ENCODE measurements at regions of chr9 and their contacts with region 1.

Region 1: GRCh38 chr9:122991370-122991830 is 42.1 kb upstream of the GPR21 start:
- DNase-seq: peak; percentile 66
- ATAC-seq: peak; percentile 90
- H3K4me3 Mint-ChIP-seq: no peak overlapping the region
- H3K27ac Mint-ChIP-seq: no peak overlapping the region
- H3K4me1 Mint-ChIP-seq: peaks cover 7% of the 10 kb centered on the region
- H3K27me3 Mint-ChIP-seq: no peaks in the 10 kb centered on the region

Region 2: GRCh38 chr9:122464633-122465567 is 526.5 kb before region 1 on chr9:
- CTCF ChIA-PET with region 1: no interaction called
- POLR2A ChIA-PET with region 1: no interaction called
- intact Hi-C with region 1: loop called (anchors 2 kb)
- DNase-seq: peak; percentile 81
- ATAC-seq: peak; percentile 84
- H3K4me3 Mint-ChIP-seq: peak overlapping the region; percentile 68
- H3K27ac Mint-ChIP-seq: peak overlapping the region; percentile 79
- H3K4me1 Mint-ChIP-seq: peaks cover 14% of the 10 kb centered on the region
- H3K27me3 Mint-ChIP-seq: peaks cover 27% of the 10 kb centered on the region

Region 3: DNA sequence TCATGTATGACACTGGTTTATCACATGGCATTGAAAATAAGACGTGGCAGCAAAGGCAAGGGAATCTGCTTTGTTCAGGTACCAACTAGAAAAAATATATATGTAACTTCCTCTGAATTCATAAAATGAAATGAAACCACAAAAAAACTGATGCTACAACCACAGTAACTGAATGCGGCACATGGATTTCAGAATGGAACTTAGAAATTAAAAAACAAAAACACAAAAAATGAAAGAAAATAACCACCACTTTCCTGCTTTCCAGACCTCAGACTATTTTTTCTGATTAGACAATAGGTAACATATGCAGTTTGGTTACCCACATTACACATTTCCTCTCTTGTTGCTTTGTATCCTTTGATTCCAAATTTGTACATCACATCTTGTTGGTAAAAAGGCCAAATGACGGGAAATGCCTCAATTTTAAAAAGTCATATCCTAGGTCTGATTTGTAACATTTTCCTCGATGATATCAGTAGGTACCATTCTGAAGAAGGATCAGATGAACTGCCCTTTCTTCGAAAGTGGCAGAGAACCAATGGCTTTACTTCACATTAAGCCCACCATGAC is 144.9 kb before region 1 on chr9:
- CTCF ChIA-PET with region 1: interaction called, 3 read pairs
- POLR2A ChIA-PET with region 1: no interaction called
- intact Hi-C with region 1: loop called in 1 of 2 experiments (anchors 10 kb)
- DNase-seq: no peak
- ATAC-seq: peak; percentile 48
- H3K4me3 Mint-ChIP-seq: no peak overlapping the region
- H3K27ac Mint-ChIP-seq: peak overlapping the region; percentile 92
- H3K4me1 Mint-ChIP-seq: peaks cover 34% of the 10 kb centered on the region
- H3K27me3 Mint-ChIP-seq: no peaks in the 10 kb centered on the region

Region 4: GRCh38 chr9:122940603-122941559 is 50.5 kb before region 1 on chr9 and contains the start of gene RABGAP1:
- CTCF ChIA-PET with region 1: interaction called, 12 read pairs
- POLR2A ChIA-PET with region 1: interaction called, 3 read pairs
- intact Hi-C with region 1: loop called (anchors 1 to 2 kb)
- DNase-seq: peak; percentile 99
- ATAC-seq: peak; percentile 99
- H3K4me3 Mint-ChIP-seq: peak within 1 kb of the TSS; percentile 99
- H3K27ac Mint-ChIP-seq: peak within 1 kb of the TSS; percentile 95
- H3K4me1 Mint-ChIP-seq: peaks cover 33% of the 10 kb centered on the region
- H3K27me3 Mint-ChIP-seq: no peaks in the 10 kb centered on the region
- total RNA-seq, gene RABGAP1: 24.3 to 27.2 TPM

Region 5: DNA sequence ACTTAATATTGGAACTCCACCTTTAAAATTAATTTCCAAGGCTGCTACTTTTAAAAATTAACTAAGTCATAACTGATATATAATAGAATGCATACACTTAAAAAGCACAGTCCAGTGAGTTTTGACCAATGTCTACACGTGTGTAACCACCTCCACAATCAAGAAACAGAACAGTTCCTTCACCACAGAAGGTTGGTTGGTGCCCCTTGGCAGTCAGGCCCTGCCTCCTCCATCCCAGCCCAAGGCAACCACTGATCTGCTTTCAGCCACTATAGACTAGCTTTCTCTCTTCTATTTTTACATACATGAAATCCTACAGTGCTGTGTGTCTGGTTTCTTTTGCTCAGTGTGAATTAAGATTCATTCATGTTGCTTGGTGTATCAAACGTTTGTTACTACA is 579.8 kb after region 1 on chr9:
- CTCF ChIA-PET with region 1: no interaction called
- POLR2A ChIA-PET with region 1: interaction called, 11 read pairs
- intact Hi-C with region 1: no loop called
- DNase-seq: no peak
- ATAC-seq: no peak
- H3K4me3 Mint-ChIP-seq: no peak overlapping the region
- H3K27ac Mint-ChIP-seq: no peak overlapping the region
- H3K4me1 Mint-ChIP-seq: peaks cover 11% of the 10 kb centered on the region
- H3K27me3 Mint-ChIP-seq: no peaks in the 10 kb centered on the region